ENCODE measurements at regions of chr6 and their contacts with region 1.

Region 1: GRCh38 chr6:110581682-110582081 is 105.3 kb upstream of the SLC22A16 start:
- DNase-seq: no peak
- ATAC-seq: 0 out of 2 replicates have a peak, but pooled peaks have one; percentile 42
- H3K4me3 ChIP-seq: no peak overlapping the region
- H3K27ac ChIP-seq: no peak overlapping the region
- H3K4me1 ChIP-seq: no peaks in the 10 kb centered on the region
- H3K27me3 ChIP-seq: no peaks in the 10 kb centered on the region
- CTCF ChIP-seq: no peak

Region 2: DNA sequence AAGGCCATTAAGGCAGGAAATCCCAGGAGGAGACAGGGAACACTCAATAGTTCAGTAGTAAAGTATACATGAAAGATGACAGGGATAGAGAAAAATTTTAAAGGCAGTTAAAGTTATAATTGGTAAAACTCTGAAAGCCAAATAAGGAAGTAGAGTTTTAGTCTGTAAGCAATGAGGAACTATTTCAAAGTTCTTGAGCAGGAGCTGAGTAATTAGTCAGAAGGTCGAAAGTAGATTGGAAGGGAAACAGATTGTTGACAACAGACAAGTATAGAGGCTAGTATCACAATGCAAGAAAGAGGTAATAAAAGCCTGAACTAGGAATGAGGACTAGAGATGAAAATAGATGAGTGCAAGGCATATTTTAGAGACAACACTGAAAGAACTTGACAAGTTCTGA is 83.3 kb after region 1 on chr6:
- CTCF ChIA-PET with region 1: interaction called, 10 read pairs
- POLR2A ChIA-PET with region 1: no interaction called
- in situ Hi-C with region 1: no loop called
- intact Hi-C with region 1: no loop called
- DNase-seq: no peak
- ATAC-seq: no peak
- H3K4me3 ChIP-seq: no peak overlapping the region
- H3K27ac ChIP-seq: peak overlapping the region; percentile 1; the same call in 1 of the 2 replicates
- H3K4me1 ChIP-seq: no peaks in the 10 kb centered on the region
- H3K27me3 ChIP-seq: no peaks in the 10 kb centered on the region
- CTCF ChIP-seq: no peak